BJ (cell line): ENCODE measurements at regions of chr11 and their contacts with region 1.

Region 1: DNA sequence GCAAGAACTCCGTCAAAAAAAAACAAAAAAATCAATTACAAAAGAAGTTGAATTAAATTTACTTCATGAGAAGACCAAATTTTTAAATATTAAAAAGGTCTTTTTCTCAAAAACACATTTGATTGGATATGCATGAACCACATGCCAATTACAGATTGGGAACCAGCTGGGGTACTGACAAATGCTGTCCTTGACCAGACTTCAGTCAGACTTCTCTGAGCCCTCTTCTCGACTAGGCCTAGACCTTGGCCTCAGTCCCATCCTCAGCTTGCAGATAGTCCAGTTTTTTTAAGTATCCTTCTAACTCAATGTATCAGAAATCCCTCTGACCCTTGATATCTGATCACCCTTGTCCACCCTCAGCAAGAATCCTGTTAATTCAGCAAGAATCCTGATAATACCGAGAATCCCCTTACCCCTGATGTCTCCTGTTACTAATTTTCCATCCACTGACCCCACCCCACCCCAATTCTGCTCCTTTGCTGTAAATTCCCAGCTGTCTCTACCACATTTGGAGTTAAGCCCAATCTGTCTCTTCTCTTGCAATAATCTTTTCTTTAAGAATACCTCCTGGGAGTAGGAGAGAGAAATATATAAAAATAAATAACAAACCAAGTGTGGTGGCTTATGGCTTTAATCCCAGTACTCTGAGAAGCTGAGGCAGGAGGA is 30.9 kb downstream of the OR4D9 start:
- DNase-seq: no peak
- H3K4me3 ChIP-seq: no peak overlapping the region
- H3K27me3 ChIP-seq: no peaks in the 10 kb centered on the region
- CTCF ChIP-seq: no peak

Region 2: DNA sequence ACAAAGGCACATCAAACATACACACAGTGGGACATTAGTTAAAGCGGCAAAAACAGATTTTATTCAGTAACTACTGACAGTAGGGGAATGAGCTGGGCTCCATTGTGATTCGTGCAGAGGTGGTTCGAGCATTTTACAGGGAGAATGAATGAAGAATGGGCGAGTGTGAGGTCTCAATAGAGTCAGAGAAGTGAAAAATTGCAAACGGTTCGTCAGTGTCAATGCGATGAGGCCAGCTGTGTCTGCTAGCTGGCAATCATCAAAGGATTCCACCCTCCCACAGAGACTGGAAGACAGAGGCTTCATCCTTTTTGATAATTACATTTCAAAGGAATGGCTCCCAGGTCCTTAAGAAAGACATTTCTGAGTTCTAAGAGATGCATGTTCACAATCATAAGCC is 13.6 kb before region 1 on chr11:
- CTCF ChIA-PET with region 1: interaction called, 13 read pairs
- POLR2A ChIA-PET with region 1: no interaction called
- DNase-seq: no peak
- H3K4me3 ChIP-seq: no peak overlapping the region
- H3K27me3 ChIP-seq: peaks cover 4% of the 10 kb centered on the region; the same call in 1 of the 2 replicates
- CTCF ChIP-seq: no peak

Region 3: DNA sequence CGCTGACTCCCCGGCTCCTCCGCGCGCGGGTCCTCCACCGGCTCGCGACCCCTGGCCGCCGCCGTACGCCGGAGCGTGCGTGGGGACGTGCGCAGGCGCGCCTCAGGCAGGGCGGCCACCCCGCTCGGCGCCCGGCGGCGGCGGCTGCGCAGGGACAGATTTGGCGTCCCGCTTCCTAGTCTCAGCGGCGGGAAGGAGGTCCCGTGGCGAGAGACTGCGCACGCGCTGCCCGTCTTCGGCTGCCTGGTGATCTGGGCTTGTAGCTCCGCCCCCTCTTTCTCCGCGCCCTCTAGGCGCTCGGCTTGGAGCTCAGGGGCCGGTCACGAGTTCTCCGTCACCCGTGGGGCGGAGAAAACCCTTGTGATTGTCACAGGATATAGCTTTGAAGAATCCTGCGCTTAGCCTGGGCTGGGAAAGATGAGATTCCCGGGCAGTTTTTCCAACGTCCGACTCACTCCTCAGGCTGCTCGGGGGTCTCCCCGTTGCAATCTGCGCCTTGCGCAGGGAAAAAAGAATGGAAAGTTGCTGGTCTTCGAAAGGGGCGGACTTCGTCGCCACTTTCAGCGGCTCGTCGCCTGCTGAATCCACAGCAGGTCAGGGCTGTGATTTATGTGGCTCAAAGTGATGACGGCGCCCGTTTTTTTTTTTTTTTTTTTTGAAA is 126.8 kb after region 1 on chr11 and contains the start of gene PATL1:
- CTCF ChIA-PET with region 1: interaction called, 12 read pairs
- POLR2A ChIA-PET with region 1: no interaction called
- DNase-seq: peak; percentile 95
- H3K4me3 ChIP-seq: peak within 1 kb of the TSS; percentile 95
- H3K27me3 ChIP-seq: no peaks in the 10 kb centered on the region
- CTCF ChIP-seq: no peak
- polyA plus RNA-seq, gene PATL1: 33.6 and 34.3 TPM in 2 replicates

Region 4: GRCh38 chr11:59680287-59681154 is 138.2 kb after region 1 on chr11:
- CTCF ChIA-PET with region 1: interaction called, 24 read pairs
- POLR2A ChIA-PET with region 1: no interaction called
- DNase-seq: no peak
- H3K4me3 ChIP-seq: no peak overlapping the region
- H3K27me3 ChIP-seq: no peaks in the 10 kb centered on the region
- CTCF ChIP-seq: peak; percentile 92

Region 5: DNA sequence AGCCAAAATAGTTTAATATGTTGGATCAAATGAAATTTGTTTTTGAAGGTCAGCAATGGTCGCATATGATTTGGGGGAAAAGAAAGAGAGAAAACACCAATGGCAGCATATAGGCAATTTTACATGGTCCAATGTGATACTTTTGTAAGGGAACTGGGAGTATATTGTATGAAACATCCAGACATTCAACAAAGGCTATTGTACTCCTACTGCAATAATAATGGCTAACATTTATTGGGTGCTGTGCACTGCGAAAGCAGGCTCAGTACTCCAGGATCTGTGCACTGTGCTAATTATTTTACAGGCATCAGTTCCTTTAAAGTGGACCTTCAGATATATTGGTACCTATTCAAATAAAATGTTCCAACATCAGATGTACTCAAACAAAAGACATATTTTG is 177.3 kb after region 1 on chr11:
- CTCF ChIA-PET with region 1: no interaction called
- POLR2A ChIA-PET with region 1: no interaction called
- DNase-seq: no peak
- H3K4me3 ChIP-seq: no peak overlapping the region
- H3K27me3 ChIP-seq: no peaks in the 10 kb centered on the region; the same call in 1 of the 2 replicates
- CTCF ChIP-seq: no peak